GM13977 (cell line): ENCODE measurements at regions of chr3 and their contacts with region 1.

Region 1: GRCh38 chr3:125437631-125438435 is 62.7 kb upstream of the ZNF148 start:
- DNase-seq: peak; percentile 40
- CTCF ChIP-seq: peak; percentile 91

Region 2: GRCh38 chr3:124928333-124929202 is 509.3 kb before region 1 on chr3:
- in situ Hi-C with region 1: loop called (anchors 25 kb)
- DNase-seq: peak; percentile 41
- CTCF ChIP-seq: peak; percentile 74

Region 3: DNA sequence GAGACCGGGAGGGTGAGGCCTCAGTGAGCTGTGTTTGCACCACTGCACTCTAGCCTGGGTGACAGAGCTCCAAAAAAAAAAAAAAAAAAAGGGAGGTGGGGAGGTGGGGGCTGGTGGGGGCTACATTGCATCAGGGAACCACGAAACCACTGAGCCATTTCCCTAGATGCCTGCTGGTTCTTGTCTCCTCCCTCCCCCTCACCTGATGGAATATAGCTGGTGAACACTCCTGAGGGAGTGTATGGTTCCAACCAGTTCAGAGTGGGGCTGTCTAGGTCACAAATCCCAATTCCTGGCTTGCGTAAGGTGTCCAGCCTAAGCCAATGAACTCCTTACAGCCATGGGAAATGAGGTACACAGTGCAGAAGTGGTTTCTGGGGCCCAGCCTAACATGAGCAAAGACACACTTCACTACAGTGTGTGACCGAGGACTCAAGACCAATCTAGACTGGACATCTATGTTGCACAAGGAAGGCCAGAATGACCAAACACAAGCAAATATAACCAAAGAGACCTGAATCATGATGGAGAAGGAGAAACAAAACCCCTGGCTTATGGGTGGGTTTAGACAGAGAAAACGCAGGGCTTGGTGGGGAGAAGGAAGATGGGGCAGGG is 196.6 kb after region 1 on chr3:
- in situ Hi-C with region 1: no loop called
- DNase-seq: no peak
- CTCF ChIP-seq: no peak